ENCODE measurements at regions of chr6 and their contacts with region 1.

Region 1: DNA sequence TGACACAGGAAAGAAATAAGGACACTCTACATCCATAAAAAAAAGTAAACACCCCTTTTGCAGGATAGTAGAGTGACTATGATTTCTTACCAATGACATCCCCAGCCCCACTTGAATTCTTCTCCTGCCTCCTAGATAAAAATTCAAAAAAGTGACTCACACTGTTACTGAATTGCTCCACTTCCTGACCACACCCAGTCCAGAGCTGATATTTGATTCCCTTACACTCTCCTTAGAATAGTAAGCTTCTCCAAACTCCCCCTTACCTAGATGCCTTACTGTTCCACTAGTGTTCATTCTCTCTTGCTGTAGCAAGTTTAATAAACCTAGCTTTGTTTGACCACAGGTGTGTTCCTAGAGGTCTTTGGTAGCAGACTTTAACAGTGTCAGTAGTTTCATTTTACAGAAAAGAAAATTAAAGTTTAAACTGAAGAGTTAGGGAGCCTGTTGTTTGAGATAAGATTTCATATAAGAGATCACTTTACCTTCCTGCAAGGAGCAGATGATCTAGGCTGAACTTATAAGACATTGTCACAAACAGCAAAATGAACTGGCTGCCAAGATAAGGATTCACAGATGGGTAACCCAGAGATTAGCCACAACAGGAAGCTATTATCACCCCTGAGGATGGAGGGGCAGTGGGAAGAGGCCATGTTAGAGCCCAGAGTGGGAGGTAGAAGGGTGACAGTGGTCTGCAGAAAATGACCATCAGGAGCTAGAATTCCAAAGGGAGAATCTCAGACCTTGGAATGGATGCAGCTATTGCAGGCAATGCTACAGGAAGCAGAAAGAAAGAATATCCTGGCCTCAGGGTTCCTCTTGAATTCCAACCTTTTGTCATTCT is 28.4 kb upstream of the BTN3A2 start:
- DNase-seq: no peak
- H3K4me3 ChIP-seq: no peak overlapping the region
- H3K27ac ChIP-seq: no peak overlapping the region
- H3K4me1 ChIP-seq: peaks cover 0 to 3% (median under 1%) of the 10 kb centered on the region in 4 donors
- H3K27me3 ChIP-seq: peaks cover 0 to 26% (median 21%) of the 10 kb centered on the region in 4 donors
- CTCF ChIP-seq: no peak
- EP300 ChIP-seq: no peak
- POLR2A ChIP-seq: no peak

Region 2: GRCh38 chr6:25675167-25675566 is 661.4 kb before region 1 on chr6:
- intact Hi-C with region 1: no loop called
- DNase-seq: no peak
- H3K4me3 ChIP-seq: no peak overlapping the region
- H3K27ac ChIP-seq: no peak overlapping the region
- H3K4me1 ChIP-seq: no peaks in the 10 kb centered on the region
- H3K27me3 ChIP-seq: no peaks in the 10 kb centered on the region
- CTCF ChIP-seq: no peak
- EP300 ChIP-seq: no peak
- POLR2A ChIP-seq: no peak

Region 3: GRCh38 chr6:26588965-26589364 is 252.4 kb after region 1 on chr6:
- intact Hi-C with region 1: loop called (anchors 2 kb)
- DNase-seq: no peak
- H3K4me3 ChIP-seq: no peak overlapping the region
- H3K27ac ChIP-seq: no peak overlapping the region
- H3K4me1 ChIP-seq: no peaks in the 10 kb centered on the region
- H3K27me3 ChIP-seq: peaks cover 0 to 76% (median 24%) of the 10 kb centered on the region in 4 donors
- CTCF ChIP-seq: no peak
- EP300 ChIP-seq: no peak
- POLR2A ChIP-seq: no peak